Gastrocnemius medialis (tissue), 4 donors: ENCODE measurements at regions of chrX and their contacts with region 1.

Region 1: DNA sequence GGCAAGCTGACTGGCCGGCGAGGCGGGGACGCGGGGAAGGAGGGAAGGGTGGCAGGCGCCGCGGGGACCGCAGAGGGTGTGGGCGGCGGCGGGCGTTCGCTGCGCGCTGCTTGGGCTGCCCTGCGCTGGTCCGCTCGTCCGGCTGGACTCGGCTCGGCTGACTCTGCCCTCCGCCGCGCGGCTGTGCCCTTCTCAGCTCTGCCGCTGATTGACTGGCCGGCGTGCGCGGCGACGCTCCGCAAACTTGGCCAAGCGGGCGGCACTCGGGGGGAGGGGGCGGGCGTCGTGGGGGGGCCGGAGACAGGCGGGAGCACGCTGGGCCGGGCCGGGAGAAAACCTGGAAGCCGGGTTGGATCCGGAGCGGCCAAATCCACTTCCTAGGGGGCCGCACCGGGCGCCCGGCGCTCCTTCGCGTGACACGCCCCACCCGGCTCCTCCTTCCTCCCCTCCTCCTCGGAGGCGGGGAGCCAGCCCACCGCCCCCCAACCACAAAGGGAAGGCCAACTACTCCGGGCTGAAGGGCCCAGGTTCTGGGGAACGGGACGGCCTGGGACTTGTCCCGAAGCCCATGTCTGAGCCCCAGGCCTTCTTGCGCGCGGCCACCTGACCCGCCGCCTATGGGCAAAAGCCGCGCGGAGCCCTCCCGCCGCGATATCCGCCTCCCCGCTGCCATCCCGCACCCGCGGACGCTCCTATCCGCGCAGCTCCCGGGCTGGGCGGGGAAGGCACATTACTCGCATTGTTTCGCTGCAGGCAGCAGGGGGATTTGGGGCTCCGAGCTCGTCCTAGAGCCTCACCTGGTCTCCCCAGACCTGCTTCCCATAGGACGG is at the start of gene GPC4:
- DNase-seq: peak; percentile 53 to 70
- ATAC-seq: peak; percentile 78 to 81
- H3K4me3 ChIP-seq: peak within 1 kb of the TSS; percentile 59 to 79 (median 72)
- H3K27ac ChIP-seq: peak within 1 kb of the TSS; percentile 80 to 86 (median 82)
- H3K4me1 ChIP-seq: peaks cover 0 to 11% of the 10 kb centered on the region in 2 donors
- H3K27me3 ChIP-seq: no peaks in the 10 kb centered on the region
- CTCF ChIP-seq: no peak
- POLR2A ChIP-seq: peak; percentile 76
- total RNA-seq, gene GPC4: 3.1 to 14.9 (median 9.6) TPM

Region 2: GRCh38 chrX:133373386-133374079 is 42.0 kb before region 1 on chrX:
- in situ Hi-C with region 1: no loop called
- intact Hi-C with region 1: loop called (anchors 5 kb)
- DNase-seq: no peak
- ATAC-seq: peak in 1 of 2 donors; percentile 24
- H3K4me3 ChIP-seq: no peak overlapping the region
- H3K27ac ChIP-seq: no peak overlapping the region
- H3K4me1 ChIP-seq: peaks cover 14 to 19% of the 10 kb centered on the region in 2 donors
- H3K27me3 ChIP-seq: no peaks in the 10 kb centered on the region
- CTCF ChIP-seq: no peak
- POLR2A ChIP-seq: no peak

Region 3: DNA sequence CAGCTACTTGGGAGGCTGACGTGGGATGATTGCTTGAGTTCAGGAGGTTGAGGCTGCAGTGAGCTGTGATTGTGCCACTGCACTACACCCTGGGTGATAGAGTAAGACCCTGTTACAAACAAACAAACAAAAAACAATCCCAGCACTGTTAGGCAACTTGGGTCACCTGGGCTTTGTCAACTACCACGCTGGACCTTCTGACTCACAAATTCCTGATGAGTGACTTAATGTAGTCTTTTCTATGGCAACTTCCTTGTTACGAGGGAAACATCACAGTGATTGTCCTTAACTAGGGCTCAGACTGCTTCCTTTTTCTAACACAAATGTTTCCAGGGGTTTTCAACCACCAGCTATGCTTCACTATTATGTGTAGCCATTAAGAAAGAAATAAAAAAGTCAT is 128.6 kb after region 1 on chrX:
- in situ Hi-C with region 1: no loop called
- intact Hi-C with region 1: loop called (anchors 10 kb)
- DNase-seq: no peak
- ATAC-seq: peak in 1 of 2 donors; percentile 50
- H3K4me3 ChIP-seq: no peak overlapping the region
- H3K27ac ChIP-seq: no peak overlapping the region
- H3K4me1 ChIP-seq: peaks cover 0 to 9% of the 10 kb centered on the region in 2 donors
- H3K27me3 ChIP-seq: no peaks in the 10 kb centered on the region
- CTCF ChIP-seq: no peak
- POLR2A ChIP-seq: no peak